Right lobe of liver (tissue), 6 donors: ENCODE measurements at regions of chr6 and their contacts with region 1.

Region 1: GRCh38 chr6:24520929-24521546 is 26.3 kb downstream of the ALDH5A1 start:
- DNase-seq: peak; percentile 69 to 79 (median 74)
- ATAC-seq: peak; percentile 99
- H3K4me3 ChIP-seq: no peak overlapping the region
- H3K27ac ChIP-seq: no peak overlapping the region
- H3K4me1 ChIP-seq: no peaks in the 10 kb centered on the region
- H3K27me3 ChIP-seq: no peaks in the 10 kb centered on the region
- CTCF ChIP-seq: peak; percentile 51 to 87 (median 80)
- POLR2A ChIP-seq: no peak

Region 2: GRCh38 chr6:24428628-24429027 is 92.4 kb before region 1 on chr6:
- intact Hi-C with region 1: loop called in 1 of 2 experiments (anchors 5 kb)
- DNase-seq: no peak
- ATAC-seq: no peak
- H3K4me3 ChIP-seq: no peak overlapping the region
- H3K27ac ChIP-seq: no peak overlapping the region
- H3K4me1 ChIP-seq: no peaks in the 10 kb centered on the region
- H3K27me3 ChIP-seq: no peaks in the 10 kb centered on the region
- CTCF ChIP-seq: no peak
- POLR2A ChIP-seq: no peak

Region 3: DNA sequence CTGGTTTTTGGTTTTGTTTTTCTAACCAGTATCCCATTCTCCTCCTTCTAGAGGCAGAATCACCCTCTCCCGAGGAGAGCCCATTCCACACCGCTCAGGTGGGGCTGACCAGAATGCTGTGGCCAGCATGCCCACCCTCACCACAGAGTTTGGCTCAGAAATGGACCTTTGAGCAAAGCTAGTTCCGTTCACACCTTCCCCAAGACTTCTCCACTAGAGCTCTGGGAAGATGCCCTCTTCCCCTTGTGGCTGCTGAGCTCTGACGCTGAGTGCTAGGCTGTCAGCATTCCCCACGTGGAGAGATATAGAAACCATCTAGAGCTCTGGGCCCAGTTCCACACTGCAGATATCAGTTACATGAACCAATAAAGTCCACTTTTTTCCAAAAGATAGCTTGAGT is 39.6 kb before region 1 on chr6:
- intact Hi-C with region 1: no loop called
- DNase-seq: no peak
- ATAC-seq: no peak
- H3K4me3 ChIP-seq: no peak overlapping the region
- H3K27ac ChIP-seq: no peak overlapping the region
- H3K4me1 ChIP-seq: no peaks in the 10 kb centered on the region
- H3K27me3 ChIP-seq: no peaks in the 10 kb centered on the region
- CTCF ChIP-seq: no peak
- POLR2A ChIP-seq: no peak